Stomach (tissue), 19 donors: ENCODE measurements at regions of chr13 and their contacts with region 1.

Region 1: DNA sequence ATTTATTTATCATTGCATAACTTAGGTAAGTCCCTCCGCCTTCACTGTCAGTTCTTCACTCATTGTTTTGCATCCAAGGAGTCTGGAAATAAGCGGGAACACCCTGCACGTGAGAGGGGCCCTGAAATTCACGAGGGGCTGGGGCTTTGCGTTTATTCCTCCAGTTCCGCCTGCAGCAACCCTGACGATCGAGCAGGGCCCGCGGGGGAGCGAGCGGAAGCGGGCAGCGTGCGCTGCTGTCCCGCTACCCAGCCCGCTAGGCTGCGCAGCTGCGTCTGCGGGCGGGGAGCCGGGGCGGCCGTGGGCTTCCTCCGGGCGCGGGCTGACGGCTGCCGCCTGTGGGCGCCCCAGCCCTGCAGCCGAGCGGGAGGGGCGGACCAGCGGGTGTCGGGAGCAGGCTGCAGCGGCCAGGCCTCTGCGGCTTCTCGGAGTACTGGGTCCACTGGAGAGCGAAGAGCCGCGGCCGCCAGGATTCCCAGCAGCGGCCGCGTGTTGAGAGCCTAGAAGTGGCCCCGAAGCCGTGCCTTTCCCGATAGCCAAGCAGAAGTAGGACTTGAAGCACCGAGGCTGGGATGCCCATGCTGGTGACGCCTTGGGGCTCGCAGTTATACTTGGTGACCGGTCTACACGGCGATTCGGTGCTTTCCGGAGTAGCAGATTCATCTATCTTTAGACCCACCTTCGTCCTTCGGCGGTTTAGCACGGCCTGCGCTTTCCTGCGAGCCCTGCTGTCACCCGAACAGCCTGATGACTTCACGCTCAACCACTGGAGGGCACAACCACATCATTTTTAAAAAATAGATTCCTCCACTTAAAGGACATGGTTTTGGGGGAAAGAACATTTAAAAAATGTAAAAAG is 32.9 kb upstream of the SACS start:
- DNase-seq: peak; percentile 61 to 90
- H3K4me3 ChIP-seq: peak overlapping the region; percentile 51 to 57 (median 52)
- H3K27ac ChIP-seq: peak overlapping the region; percentile 56 to 83 (median 76)
- H3K4me1 ChIP-seq: peaks cover 0 to 30% (median 17%) of the 10 kb centered on the region in 4 donors
- H3K27me3 ChIP-seq: no peaks in the 10 kb centered on the region
- CTCF ChIP-seq: peak in 5 of 7 experiments; percentile 37 to 60 (median 48)
- EP300 ChIP-seq: no peak
- POLR2A ChIP-seq: no peak

Region 2: GRCh38 chr13:23715762-23716235 is 249.4 kb after region 1 on chr13:
- intact Hi-C with region 1: loop called (anchors 10 kb)
- DNase-seq: peak in 1 of 2 donors; percentile 60
- H3K4me3 ChIP-seq: no peak overlapping the region
- H3K27ac ChIP-seq: no peak overlapping the region
- H3K4me1 ChIP-seq: no peaks in the 10 kb centered on the region
- H3K27me3 ChIP-seq: no peaks in the 10 kb centered on the region
- CTCF ChIP-seq: peak in 2 of 7 experiments; percentile 33 to 36
- EP300 ChIP-seq: no peak
- POLR2A ChIP-seq: no peak

Region 3: DNA sequence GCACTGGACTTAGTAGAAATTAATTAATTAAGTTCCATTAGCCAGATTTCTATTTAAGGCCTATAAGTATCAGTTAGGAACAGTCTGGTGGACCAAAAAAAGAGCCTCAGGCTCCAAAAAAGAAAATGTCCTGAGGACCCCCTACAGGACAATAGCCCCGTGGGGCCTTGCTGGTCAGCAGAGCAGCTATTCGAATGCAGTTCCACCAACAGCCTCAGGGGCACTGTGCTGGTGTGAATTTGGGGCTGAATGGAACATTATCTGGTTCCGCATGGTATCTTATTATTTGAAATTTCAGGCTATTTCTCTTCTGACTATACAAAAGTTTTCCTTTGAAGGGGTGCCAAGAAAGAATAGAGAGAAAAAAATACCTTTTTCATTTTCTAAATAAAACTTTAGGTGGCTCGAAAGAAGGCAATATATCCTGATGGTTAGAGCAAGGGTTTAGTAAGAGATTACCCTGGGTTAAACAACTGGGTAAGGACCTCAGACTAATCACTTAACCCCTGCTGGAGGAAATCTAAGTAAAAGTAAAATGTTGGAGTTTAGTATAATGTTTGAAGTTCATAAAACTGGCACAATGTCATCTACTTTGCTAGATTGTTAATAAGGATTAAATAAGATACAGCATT is 275.6 kb after region 1 on chr13:
- intact Hi-C with region 1: no loop called
- DNase-seq: no peak
- H3K4me3 ChIP-seq: no peak overlapping the region
- H3K27ac ChIP-seq: no peak overlapping the region
- H3K4me1 ChIP-seq: peaks cover 7 to 28% (median 8%) of the 10 kb centered on the region in 4 donors
- H3K27me3 ChIP-seq: no peaks in the 10 kb centered on the region
- CTCF ChIP-seq: no peak
- EP300 ChIP-seq: no peak
- POLR2A ChIP-seq: no peak

Region 4: GRCh38 chr13:23871616-23872220 is 405.3 kb after region 1 on chr13:
- intact Hi-C with region 1: loop called (anchors 10 kb)
- DNase-seq: peak in 1 of 2 donors; percentile 58
- H3K4me3 ChIP-seq: no peak overlapping the region
- H3K27ac ChIP-seq: no peak overlapping the region
- H3K4me1 ChIP-seq: peaks cover 0 to 16% (median 0%) of the 10 kb centered on the region in 4 donors
- H3K27me3 ChIP-seq: no peaks in the 10 kb centered on the region
- CTCF ChIP-seq: peak in 5 of 7 experiments; percentile 24 to 64 (median 42)
- EP300 ChIP-seq: no peak
- POLR2A ChIP-seq: no peak

Region 5: GRCh38 chr13:23921451-23921888 is 455.1 kb after region 1 on chr13:
- intact Hi-C with region 1: no loop called
- DNase-seq: peak in 1 of 2 donors; percentile 62
- H3K4me3 ChIP-seq: no peak overlapping the region
- H3K27ac ChIP-seq: no peak overlapping the region
- H3K4me1 ChIP-seq: no peaks in the 10 kb centered on the region
- H3K27me3 ChIP-seq: no peaks in the 10 kb centered on the region
- CTCF ChIP-seq: peak in 4 of 7 experiments; percentile 29 to 63 (median 50)
- EP300 ChIP-seq: no peak
- POLR2A ChIP-seq: no peak